CD8-positive, alpha-beta T cell (primary cell): ENCODE measurements at regions of chr3 and their contacts with region 1.

Region 1: DNA sequence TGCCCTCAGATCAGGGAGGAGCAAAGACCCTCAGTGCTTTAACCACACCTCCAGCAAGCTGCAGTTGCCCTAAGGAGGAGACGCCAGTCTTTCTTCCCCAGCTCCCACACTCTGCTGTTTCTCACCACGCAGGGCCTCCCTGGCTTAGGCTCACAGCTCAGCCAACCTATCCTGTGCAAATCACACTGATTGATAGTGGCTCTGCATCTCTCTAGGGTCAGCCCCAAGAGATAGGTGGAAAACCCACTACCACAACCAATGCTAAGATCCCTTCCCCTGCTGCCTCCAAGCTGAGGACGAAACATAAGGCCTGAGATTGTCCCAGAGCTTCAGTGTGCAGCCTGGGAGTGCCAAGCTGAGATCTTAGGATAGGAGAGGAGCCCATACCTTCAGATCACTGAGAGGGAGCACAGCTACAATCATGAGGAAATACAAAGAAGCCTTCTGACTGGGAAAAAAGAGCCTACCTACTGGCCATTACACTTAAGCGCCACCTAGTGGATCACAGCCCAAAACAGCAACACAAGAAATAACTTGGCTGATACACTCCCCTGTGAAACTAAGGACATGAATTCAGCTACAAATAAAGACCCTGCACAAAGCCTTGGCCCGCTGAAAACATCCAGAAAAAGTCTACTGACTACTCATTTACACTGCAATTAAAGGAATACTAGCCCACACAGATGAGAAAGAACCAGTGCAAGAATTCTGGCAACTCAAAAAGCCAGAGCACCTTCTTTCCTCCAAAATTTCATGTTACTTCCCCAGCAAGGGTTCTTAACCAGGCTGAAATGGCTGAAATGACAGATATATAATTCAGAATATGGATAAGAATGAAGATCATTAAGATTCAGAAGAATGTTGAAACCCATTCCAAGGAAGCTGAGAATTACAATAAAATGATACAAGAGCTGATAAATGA is 271.5 kb upstream of the DCBLD2 start:
- DNase-seq: peak in 1 of 9 experiments; percentile 37
- ATAC-seq: no peak
- H3K4me3 ChIP-seq: no peak overlapping the region
- H3K4me3 Mint-ChIP-seq: no peak overlapping the region
- H3K27ac ChIP-seq: no peak overlapping the region
- H3K27ac Mint-ChIP-seq: no peak overlapping the region
- H3K4me1 ChIP-seq: no peaks in the 10 kb centered on the region
- H3K4me1 Mint-ChIP-seq: no peaks in the 10 kb centered on the region
- H3K27me3 ChIP-seq: no peaks in the 10 kb centered on the region
- H3K27me3 Mint-ChIP-seq: no peaks in the 10 kb centered on the region
- CTCF ChIP-seq: peak; percentile 33

Region 2: DNA sequence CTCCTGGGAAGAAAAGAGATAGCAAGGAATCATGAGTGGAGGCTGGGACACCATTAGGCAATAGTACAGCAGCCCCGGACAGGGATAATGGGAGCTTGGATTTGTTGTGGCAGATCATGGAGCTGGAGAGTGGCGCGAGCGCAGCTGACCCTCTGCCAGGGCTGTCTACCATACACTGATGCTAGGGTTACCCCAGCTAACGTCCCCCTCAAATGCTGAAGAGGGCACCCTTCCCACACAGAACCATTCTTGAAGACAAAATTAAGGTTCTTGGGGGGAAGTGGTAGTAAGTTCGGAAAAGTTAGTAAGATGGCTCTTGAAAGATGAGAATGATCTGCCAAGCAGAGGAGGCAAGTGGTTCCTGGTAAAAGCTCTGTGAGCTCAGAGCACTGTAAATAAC is 348.7 kb before region 1 on chr3:
- CTCF ChIA-PET with region 1: no interaction called
- POLR2A ChIA-PET with region 1: no interaction called
- intact Hi-C with region 1: loop called in 1 of 2 experiments (anchors 5 kb)
- DNase-seq: peak in 1 of 9 experiments; percentile 5
- ATAC-seq: no peak
- H3K4me3 ChIP-seq: no peak overlapping the region
- H3K4me3 Mint-ChIP-seq: no peak overlapping the region
- H3K27ac ChIP-seq: no peak overlapping the region
- H3K27ac Mint-ChIP-seq: no peak overlapping the region
- H3K4me1 ChIP-seq: no peaks in the 10 kb centered on the region
- H3K4me1 Mint-ChIP-seq: no peaks in the 10 kb centered on the region
- H3K27me3 ChIP-seq: no peaks in the 10 kb centered on the region
- H3K27me3 Mint-ChIP-seq: no peaks in the 10 kb centered on the region
- CTCF ChIP-seq: no peak

Region 3: DNA sequence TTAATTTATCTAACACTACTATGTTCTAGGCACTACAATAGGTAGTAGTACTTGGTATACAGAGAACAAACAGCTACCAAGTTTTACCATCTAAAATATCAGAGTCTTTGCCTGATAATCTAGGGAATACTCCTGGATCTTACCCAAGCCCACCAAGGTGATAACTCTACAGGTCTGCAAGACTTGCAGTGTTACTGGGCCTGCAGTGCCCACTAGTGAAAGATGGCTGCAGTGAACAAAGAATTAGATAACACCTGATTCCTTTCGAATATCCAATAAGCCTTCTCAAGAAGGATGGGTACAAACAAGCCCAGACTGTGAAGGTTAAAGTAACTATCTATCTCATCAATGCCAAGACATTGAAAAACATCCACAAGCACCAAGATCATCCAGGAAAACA is 45.5 kb after region 1 on chr3:
- CTCF ChIA-PET with region 1: no interaction called
- POLR2A ChIA-PET with region 1: no interaction called
- intact Hi-C with region 1: loop called in 1 of 2 experiments (anchors 2 kb)
- DNase-seq: no peak
- ATAC-seq: no peak
- H3K4me3 ChIP-seq: no peak overlapping the region
- H3K4me3 Mint-ChIP-seq: no peak overlapping the region
- H3K27ac ChIP-seq: no peak overlapping the region
- H3K27ac Mint-ChIP-seq: no peak overlapping the region
- H3K4me1 ChIP-seq: no peaks in the 10 kb centered on the region
- H3K4me1 Mint-ChIP-seq: no peaks in the 10 kb centered on the region
- H3K27me3 ChIP-seq: no peaks in the 10 kb centered on the region
- H3K27me3 Mint-ChIP-seq: no peaks in the 10 kb centered on the region
- CTCF ChIP-seq: no peak